Activated T-helper 2 cell treated with anti-CD3 and anti-CD28 coated beads, Interferon-gamma antibody, Interleukin-2, Interleukin-4, amounts not matched to agents 10 μg/mL and 5 μg/mL and 100 μg/mL, durations not matched to agents 14 hours and 24 hours and 36 hours (primary cell): ENCODE measurements at regions of chr5 and their contacts with region 1.

Region 1: GRCh38 chr5:36269479-36270219 is 27.9 kb upstream of the NADK2 start:
- DNase-seq: no peak
- H3K4me3 Mint-ChIP-seq: no peak overlapping the region
- H3K27ac Mint-ChIP-seq: no peak overlapping the region
- H3K4me1 Mint-ChIP-seq: no peaks in the 10 kb centered on the region
- H3K27me3 Mint-ChIP-seq: peaks cover 21% of the 10 kb centered on the region

Region 2: DNA sequence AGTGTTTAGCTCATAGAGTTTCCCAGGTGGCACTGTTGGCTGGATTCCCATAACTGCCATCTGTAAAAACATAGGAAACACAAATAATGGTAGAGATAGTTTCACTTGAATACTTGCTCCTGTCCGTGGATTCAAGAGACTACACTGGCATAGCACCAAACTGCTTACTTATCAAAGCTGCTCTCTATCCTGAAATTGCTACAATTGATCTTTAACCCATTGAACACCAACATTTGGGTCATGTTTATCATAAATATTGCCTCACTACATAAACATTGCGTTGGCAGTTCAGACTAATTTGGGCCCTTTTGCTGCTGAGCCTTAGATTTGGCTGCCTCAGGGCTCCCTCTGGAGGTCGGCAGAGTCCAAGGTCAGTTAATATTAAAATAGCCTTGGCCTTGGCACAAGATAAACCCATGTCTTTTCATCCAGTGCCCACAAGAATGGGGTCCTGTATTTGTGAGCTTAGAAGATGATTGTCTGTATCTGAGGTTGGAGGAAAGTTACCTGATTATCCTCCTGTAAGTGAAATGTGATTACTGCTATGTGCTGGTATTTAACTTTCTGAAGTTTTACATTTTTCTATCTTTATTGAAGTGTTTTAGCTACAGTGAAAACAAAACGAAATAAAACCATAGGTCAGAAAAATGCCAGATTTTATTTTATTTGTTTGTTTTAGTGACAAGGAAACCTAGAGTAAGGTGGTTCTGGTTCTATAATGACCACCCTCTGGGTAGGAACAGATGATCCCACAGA is 36.1 kb after region 1 on chr5:
- intact Hi-C with region 1: loop called (anchors 2 kb)
- DNase-seq: no peak
- H3K4me3 Mint-ChIP-seq: no peak overlapping the region
- H3K27ac Mint-ChIP-seq: no peak overlapping the region
- H3K4me1 Mint-ChIP-seq: peaks cover 2% of the 10 kb centered on the region
- H3K27me3 Mint-ChIP-seq: peaks cover 15% of the 10 kb centered on the region